ENCODE measurements at regions of chr18 and their contacts with region 1.

Region 1: DNA sequence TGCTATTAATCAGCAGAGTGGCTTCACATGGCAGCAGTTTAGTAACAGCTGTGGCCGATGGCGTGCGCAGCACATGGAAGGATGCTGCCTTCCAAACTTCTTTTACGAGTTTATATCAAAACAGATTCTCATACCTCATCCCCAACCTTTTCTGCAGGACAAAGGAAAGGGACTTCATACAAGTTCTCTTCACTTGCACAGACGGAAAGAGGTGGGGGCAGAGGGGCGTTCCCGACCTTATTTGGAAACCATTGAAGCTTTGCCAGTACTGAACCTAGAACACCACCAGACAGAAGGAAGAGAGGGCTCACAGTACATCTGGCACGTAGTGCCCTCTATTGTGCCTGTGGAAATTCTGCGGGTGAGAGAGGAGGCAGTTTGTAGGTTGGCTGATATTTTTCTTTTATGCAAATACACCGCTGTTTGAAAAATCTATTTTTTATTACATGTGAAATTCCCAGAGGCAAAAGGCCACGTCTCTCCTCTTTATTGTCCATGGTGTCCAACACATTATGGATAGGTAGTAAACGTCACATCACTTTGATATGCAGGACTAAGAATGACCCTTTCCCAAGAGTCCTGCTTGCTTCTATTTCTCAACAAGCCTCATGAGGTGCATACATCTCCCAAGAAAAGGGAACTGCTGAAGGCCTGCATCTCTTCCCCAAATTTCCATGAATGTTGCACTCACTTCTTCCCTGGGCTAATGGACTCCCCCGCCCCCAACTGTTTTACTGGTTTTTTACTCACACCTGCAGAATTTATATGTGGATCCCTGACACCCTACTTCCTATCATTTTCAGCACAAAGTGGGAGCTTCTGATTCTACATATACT is 31.3 kb downstream of the COLEC12 start:
- DNase-seq: peak; percentile 49
- H3K4me3 ChIP-seq: no peak overlapping the region
- H3K27ac ChIP-seq: no peak overlapping the region
- H3K4me1 ChIP-seq: peaks cover 7% of the 10 kb centered on the region
- H3K27me3 ChIP-seq: no peaks in the 10 kb centered on the region
- CTCF ChIP-seq: peak; percentile 56; the same call in 1 of the 2 replicates

Region 2: DNA sequence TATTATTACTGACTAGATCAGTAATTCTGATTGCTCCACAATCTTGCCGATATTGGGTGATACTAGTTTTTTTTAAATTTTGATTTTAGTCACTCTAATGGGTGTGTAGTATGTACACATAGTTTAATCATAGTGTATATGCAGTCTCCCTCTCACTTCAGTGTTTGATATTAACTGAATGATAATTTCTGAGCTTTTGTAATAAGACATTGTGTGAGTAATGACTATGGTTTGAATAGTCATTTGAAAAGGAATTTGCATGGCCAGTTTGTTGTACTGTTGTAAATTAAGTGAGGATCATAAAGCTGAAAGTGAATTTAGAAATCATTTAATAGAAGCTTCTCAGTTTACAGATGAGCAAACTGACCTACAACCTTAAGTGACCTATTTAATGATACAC is 277.4 kb before region 1 on chr18:
- CTCF ChIA-PET with region 1: no interaction called
- POLR2A ChIA-PET with region 1: no interaction called
- intact Hi-C with region 1: no loop called
- DNase-seq: no peak
- H3K4me3 ChIP-seq: no peak overlapping the region
- H3K27ac ChIP-seq: no peak overlapping the region
- H3K4me1 ChIP-seq: no peaks in the 10 kb centered on the region
- H3K27me3 ChIP-seq: no peaks in the 10 kb centered on the region
- CTCF ChIP-seq: no peak

Region 3: GRCh38 chr18:293536-293935 is 175.6 kb before region 1 on chr18:
- CTCF ChIA-PET with region 1: no interaction called
- POLR2A ChIA-PET with region 1: no interaction called
- intact Hi-C with region 1: loop called (anchors 5 kb)
- DNase-seq: no peak
- H3K4me3 ChIP-seq: no peak overlapping the region
- H3K27ac ChIP-seq: no peak overlapping the region
- H3K4me1 ChIP-seq: no peaks in the 10 kb centered on the region
- H3K27me3 ChIP-seq: no peaks in the 10 kb centered on the region
- CTCF ChIP-seq: no peak

Measured in A673 (cell line).